ENCODE measurements at regions of chr2 and their contacts with region 1.

Region 1: GRCh38 chr2:200677721-200678585 is 92.1 kb downstream of the AOX1 start:
- DNase-seq: peak; percentile 26
- H3K4me3 ChIP-seq: no peak overlapping the region
- H3K27me3 ChIP-seq: no peaks in the 10 kb centered on the region
- CTCF ChIP-seq: peak; percentile 19; the same call in 1 of the 2 replicates

Region 2: GRCh38 chr2:200471324-200471848 is 206.6 kb before region 1 on chr2:
- CTCF ChIA-PET with region 1: no interaction called
- POLR2A ChIA-PET with region 1: no interaction called
- DNase-seq: no peak
- H3K4me3 ChIP-seq: no peak overlapping the region
- H3K27me3 ChIP-seq: no peaks in the 10 kb centered on the region
- CTCF ChIP-seq: peak; percentile 52

Region 3: GRCh38 chr2:200624658-200625057 is 53.3 kb before region 1 on chr2:
- CTCF ChIA-PET with region 1: no interaction called
- POLR2A ChIA-PET with region 1: interaction called, 15 read pairs
- DNase-seq: no peak
- H3K4me3 ChIP-seq: no peak overlapping the region
- H3K27me3 ChIP-seq: no peaks in the 10 kb centered on the region
- CTCF ChIP-seq: no peak